Activated T-helper 1 cell treated with anti-CD3 and anti-CD28 coated beads, Interleukin-12 subunit alpha, Interleukin-12 subunit beta, Interleukin-2, Interleukin-4 antibody, amounts not matched to agents 30 ng/mL and 10 ng/mL and 1 ng/mL, durations not matched to agents 14 hours and 24 hours and 36 hours (primary cell): ENCODE measurements at regions of chr11 and their contacts with region 1.

Region 1: GRCh38 chr11:43311791-43312607 is at the start of gene API5:
- DNase-seq: peak; percentile 89
- H3K4me3 Mint-ChIP-seq: peak within 1 kb of the TSS; percentile 97
- H3K27ac Mint-ChIP-seq: peak within 1 kb of the TSS; percentile 93
- H3K4me1 Mint-ChIP-seq: peaks cover 50% of the 10 kb centered on the region
- H3K27me3 Mint-ChIP-seq: peaks cover 2% of the 10 kb centered on the region
- total RNA-seq, gene API5: 165 and 167 TPM in 2 replicates

Region 2: DNA sequence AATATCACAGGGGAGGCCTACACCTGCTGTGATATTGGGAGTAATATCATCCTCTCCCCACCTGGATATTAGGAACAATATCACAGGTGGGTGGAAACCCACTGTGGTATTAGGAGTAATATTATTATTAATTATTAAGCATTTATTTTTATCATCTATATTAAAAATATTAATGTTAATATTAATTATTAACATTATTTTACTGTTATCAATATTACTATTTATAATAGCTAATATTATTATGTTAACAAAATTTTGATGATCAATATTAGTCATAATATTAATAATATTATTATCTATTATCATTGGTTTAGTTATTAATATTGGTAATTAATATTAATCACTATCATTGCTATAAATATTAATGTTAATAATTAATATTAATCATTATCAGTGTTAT is 161.3 kb before region 1 on chr11:
- intact Hi-C with region 1: loop called (anchors 5 kb)
- DNase-seq: no peak
- H3K4me3 Mint-ChIP-seq: no peak overlapping the region
- H3K27ac Mint-ChIP-seq: no peak overlapping the region
- H3K4me1 Mint-ChIP-seq: peaks cover 12% of the 10 kb centered on the region
- H3K27me3 Mint-ChIP-seq: no peaks in the 10 kb centered on the region

Region 3: GRCh38 chr11:43358801-43359421 is 46.9 kb after region 1 on chr11 and contains the start of gene TTC17:
- intact Hi-C with region 1: loop called (anchors 1 kb)
- DNase-seq: peak; percentile 92
- H3K4me3 Mint-ChIP-seq: peak within 1 kb of the TSS; percentile 94
- H3K27ac Mint-ChIP-seq: peak within 1 kb of the TSS; percentile 92
- H3K4me1 Mint-ChIP-seq: peaks cover 38% of the 10 kb centered on the region
- H3K27me3 Mint-ChIP-seq: peaks cover 2% of the 10 kb centered on the region
- total RNA-seq, gene TTC17: 74.4 and 74.7 TPM in 2 replicates

Region 4: GRCh38 chr11:43419460-43419859 is 107.5 kb after region 1 on chr11:
- intact Hi-C with region 1: loop called (anchors 1 kb)
- DNase-seq: peak; percentile 6
- H3K4me3 Mint-ChIP-seq: no peak overlapping the region
- H3K27ac Mint-ChIP-seq: no peak overlapping the region
- H3K4me1 Mint-ChIP-seq: no peaks in the 10 kb centered on the region
- H3K27me3 Mint-ChIP-seq: no peaks in the 10 kb centered on the region

Region 5: GRCh38 chr11:43643898-43644620 is 332.1 kb after region 1 on chr11:
- intact Hi-C with region 1: loop called (anchors 1 kb)
- DNase-seq: peak; percentile 83
- H3K4me3 Mint-ChIP-seq: peak overlapping the region; percentile 99
- H3K27ac Mint-ChIP-seq: peak overlapping the region; percentile 91
- H3K4me1 Mint-ChIP-seq: peaks cover 19% of the 10 kb centered on the region
- H3K27me3 Mint-ChIP-seq: peaks cover 18% of the 10 kb centered on the region

Region 6: DNA sequence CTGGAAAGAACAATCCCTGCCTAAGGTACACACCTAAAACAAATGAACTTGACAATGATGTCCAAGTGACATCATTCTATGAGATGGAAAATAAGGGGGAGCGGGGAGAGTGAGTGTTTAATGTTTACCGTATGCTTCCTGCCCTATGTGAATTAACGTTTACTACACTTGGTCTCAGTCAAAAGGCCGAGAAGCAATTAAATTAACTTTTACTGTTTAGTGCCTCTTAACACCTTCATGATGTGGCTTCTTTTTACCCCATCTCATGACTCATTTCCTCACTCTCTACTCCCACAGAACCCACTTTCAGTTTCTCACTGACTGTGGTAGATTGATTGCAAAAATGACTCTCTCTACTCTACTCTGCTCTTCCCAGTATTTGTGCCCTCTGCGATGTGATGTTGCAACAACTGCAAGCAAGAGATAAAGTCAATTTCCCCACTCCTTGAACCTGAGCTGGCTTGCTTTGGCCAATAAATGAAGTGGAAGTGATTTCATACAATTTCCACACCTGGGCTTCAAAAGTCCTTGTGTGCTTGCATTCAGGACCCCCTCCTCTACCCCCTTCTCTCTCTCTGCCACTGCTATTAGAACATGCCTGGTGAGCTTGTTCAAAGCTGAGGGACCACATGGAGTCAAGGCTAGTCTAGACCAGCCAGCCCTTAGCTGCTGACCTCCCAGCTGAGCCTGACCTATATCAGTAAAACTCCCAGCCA is 557.0 kb after region 1 on chr11:
- intact Hi-C with region 1: loop called (anchors 2 kb)
- DNase-seq: peak; percentile 57
- H3K4me3 Mint-ChIP-seq: peak overlapping the region; percentile 45
- H3K27ac Mint-ChIP-seq: peak overlapping the region; percentile 42
- H3K4me1 Mint-ChIP-seq: peaks cover 27% of the 10 kb centered on the region
- H3K27me3 Mint-ChIP-seq: peaks cover 53% of the 10 kb centered on the region

Region 7: GRCh38 chr11:44095506-44096394 is 783.8 kb after region 1 on chr11 and contains the start of gene EXT2:
- intact Hi-C with region 1: loop called (anchors 2 kb)
- DNase-seq: peak; percentile 82
- H3K4me3 Mint-ChIP-seq: peak within 1 kb of the TSS; percentile 87
- H3K27ac Mint-ChIP-seq: peak within 1 kb of the TSS; percentile 50
- H3K4me1 Mint-ChIP-seq: peaks cover 30% of the 10 kb centered on the region
- H3K27me3 Mint-ChIP-seq: no peaks in the 10 kb centered on the region
- total RNA-seq, gene EXT2: 31.0 and 35.6 TPM in 2 replicates